CD4-positive, alpha-beta T cell (primary cell): ENCODE measurements at regions of chr5 and their contacts with region 1.

Region 1: DNA sequence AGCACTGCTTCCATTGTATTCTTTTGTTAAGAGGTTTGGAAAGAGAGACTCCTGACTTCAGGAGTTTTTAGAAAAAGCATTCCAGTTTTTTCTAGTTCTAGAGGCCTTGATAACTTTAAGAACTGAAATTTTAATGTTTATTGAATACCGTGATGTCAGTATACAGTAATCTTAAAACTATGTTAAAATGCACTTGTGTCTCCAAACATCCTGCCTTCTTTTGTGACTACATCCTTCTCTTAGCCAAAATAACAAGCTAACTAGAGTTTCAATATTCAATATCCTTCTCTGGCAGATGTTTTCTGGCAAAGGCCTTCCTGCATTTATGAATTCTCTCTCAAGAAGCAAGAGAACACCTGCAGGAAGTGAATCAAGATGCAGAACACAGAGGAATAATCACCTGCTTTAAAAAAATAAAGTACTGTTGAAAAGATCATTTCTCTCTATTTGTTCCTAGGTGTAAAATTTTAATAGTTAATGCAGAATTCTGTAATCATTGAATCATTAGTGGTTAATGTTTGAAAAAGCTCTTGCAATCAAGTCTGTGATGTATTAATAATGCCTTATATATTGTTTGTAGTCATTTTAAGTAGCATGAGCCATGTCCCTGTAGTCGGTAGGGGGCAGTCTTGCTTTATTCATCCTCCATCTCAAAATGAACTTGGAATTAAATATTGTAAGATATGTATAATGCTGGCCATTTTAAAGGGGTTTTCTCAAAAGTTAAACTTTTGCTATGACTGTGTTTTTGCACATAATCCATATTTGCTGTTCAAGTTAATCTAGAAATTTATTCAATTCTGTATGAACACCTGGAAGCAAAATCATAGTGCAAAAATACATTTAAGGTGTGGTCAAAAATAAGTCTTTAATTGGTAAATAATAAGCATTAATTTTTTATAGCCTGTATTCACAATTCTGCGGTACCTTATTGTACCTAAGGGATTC is 43.1 kb downstream of the NDFIP1 start:
- DNase-seq: peak; percentile 14 to 84 (median 46)
- ATAC-seq: peak; percentile 67
- H3K4me3 ChIP-seq: no peak overlapping the region
- H3K4me3 Mint-ChIP-seq: no peak overlapping the region
- H3K27ac ChIP-seq: no peak overlapping the region
- H3K27ac Mint-ChIP-seq: peak overlapping the region; percentile 69
- H3K4me1 ChIP-seq: no peaks in the 10 kb centered on the region
- H3K4me1 Mint-ChIP-seq: peaks cover 11% of the 10 kb centered on the region
- H3K27me3 ChIP-seq: no peaks in the 10 kb centered on the region
- H3K27me3 Mint-ChIP-seq: no peaks in the 10 kb centered on the region
- CTCF ChIP-seq: peak; percentile 94

Region 2: GRCh38 chr5:140977003-140977402 is 1174.7 kb before region 1 on chr5:
- CTCF ChIA-PET with region 1: no interaction called
- POLR2A ChIA-PET with region 1: no interaction called
- intact Hi-C with region 1: no loop called
- DNase-seq: no peak
- ATAC-seq: no peak
- H3K4me3 ChIP-seq: no peak overlapping the region
- H3K4me3 Mint-ChIP-seq: no peak overlapping the region
- H3K27ac ChIP-seq: no peak overlapping the region
- H3K27ac Mint-ChIP-seq: no peak overlapping the region
- H3K4me1 ChIP-seq: no peaks in the 10 kb centered on the region
- H3K4me1 Mint-ChIP-seq: no peaks in the 10 kb centered on the region
- H3K27me3 ChIP-seq: peaks cover 0 to 6% of the 10 kb centered on the region in 2 experiments
- H3K27me3 Mint-ChIP-seq: peaks cover 36% of the 10 kb centered on the region
- CTCF ChIP-seq: no peak

Region 3: GRCh38 chr5:141245250-141245717 is 906.4 kb before region 1 on chr5 and contains the start of gene PCDHB15:
- CTCF ChIA-PET with region 1: no interaction called
- POLR2A ChIA-PET with region 1: no interaction called
- intact Hi-C with region 1: no loop called
- DNase-seq: peak in 4 of 14 experiments; percentile 5 to 42 (median 17)
- ATAC-seq: no peak
- H3K4me3 ChIP-seq: no peak within 1 kb of the TSS
- H3K4me3 Mint-ChIP-seq: peak within 1 kb of the TSS; percentile 51
- H3K27ac ChIP-seq: no peak within 1 kb of the TSS
- H3K27ac Mint-ChIP-seq: no peak within 1 kb of the TSS
- H3K4me1 ChIP-seq: peaks cover 3% of the 10 kb centered on the region
- H3K4me1 Mint-ChIP-seq: peaks cover 4% of the 10 kb centered on the region
- H3K27me3 ChIP-seq: peaks cover 27 to 29% of the 10 kb centered on the region in 2 experiments
- H3K27me3 Mint-ChIP-seq: peaks cover 55% of the 10 kb centered on the region
- CTCF ChIP-seq: no peak
- total RNA-seq, gene PCDHB15: not detected

Region 4: GRCh38 chr5:142206801-142207200 is 55.1 kb after region 1 on chr5:
- CTCF ChIA-PET with region 1: no interaction called
- POLR2A ChIA-PET with region 1: no interaction called
- intact Hi-C with region 1: no loop called
- DNase-seq: no peak
- ATAC-seq: no peak
- H3K4me3 ChIP-seq: no peak overlapping the region
- H3K4me3 Mint-ChIP-seq: no peak overlapping the region
- H3K27ac ChIP-seq: no peak overlapping the region
- H3K27ac Mint-ChIP-seq: no peak overlapping the region
- H3K4me1 ChIP-seq: no peaks in the 10 kb centered on the region
- H3K4me1 Mint-ChIP-seq: no peaks in the 10 kb centered on the region
- H3K27me3 ChIP-seq: no peaks in the 10 kb centered on the region
- H3K27me3 Mint-ChIP-seq: no peaks in the 10 kb centered on the region
- CTCF ChIP-seq: no peak

Region 5: GRCh38 chr5:142324871-142325724 is 173.4 kb after region 1 on chr5 and contains the start of gene SPRY4:
- CTCF ChIA-PET with region 1: no interaction called
- POLR2A ChIA-PET with region 1: interaction called, 3 read pairs
- intact Hi-C with region 1: loop called (anchors 5 to 10 kb)
- DNase-seq: peak; percentile 51 to 86 (median 74)
- ATAC-seq: peak; percentile 81
- H3K4me3 ChIP-seq: peak within 1 kb of the TSS; percentile 61
- H3K4me3 Mint-ChIP-seq: peak within 1 kb of the TSS; percentile 87
- H3K27ac ChIP-seq: no peak within 1 kb of the TSS
- H3K27ac Mint-ChIP-seq: no peak within 1 kb of the TSS
- H3K4me1 ChIP-seq: peaks cover 33% of the 10 kb centered on the region
- H3K4me1 Mint-ChIP-seq: peaks cover 49% of the 10 kb centered on the region
- H3K27me3 ChIP-seq: peaks cover 54 to 58% of the 10 kb centered on the region in 2 experiments
- H3K27me3 Mint-ChIP-seq: peaks cover 81% of the 10 kb centered on the region
- CTCF ChIP-seq: no peak
- total RNA-seq, gene SPRY4: 0.16 to 0.34 TPM

Region 6: DNA sequence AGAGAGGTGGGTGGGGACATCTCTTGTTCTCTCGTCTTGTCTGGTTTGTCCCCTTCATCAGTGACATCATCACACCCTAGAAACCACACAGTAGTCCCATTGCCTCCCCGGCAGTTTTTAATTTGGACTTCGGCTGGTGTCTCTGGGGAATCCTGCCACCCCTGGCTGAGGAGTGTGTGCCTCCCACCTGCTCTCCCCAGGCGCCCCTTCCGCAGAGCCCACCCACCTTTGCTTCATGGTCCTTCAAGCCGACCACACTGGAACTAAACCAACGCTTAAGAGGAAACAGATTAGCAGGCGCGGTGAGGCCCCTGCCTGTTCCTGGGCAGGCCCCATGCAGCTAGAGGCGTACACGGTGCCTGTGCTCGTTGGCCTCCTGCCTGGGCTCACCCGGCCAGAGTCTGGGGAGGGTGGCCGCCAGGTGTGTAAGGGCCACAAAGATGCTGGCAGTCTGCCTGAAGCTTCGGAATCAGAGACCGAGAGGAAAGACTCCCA is 280.7 kb after region 1 on chr5:
- CTCF ChIA-PET with region 1: no interaction called
- POLR2A ChIA-PET with region 1: no interaction called
- intact Hi-C with region 1: loop called in 1 of 2 experiments (anchors 2 kb)
- DNase-seq: peak in 11 of 14 experiments; percentile 3 to 69 (median 15)
- ATAC-seq: peak; percentile 50
- H3K4me3 ChIP-seq: peak overlapping the region; percentile 14
- H3K4me3 Mint-ChIP-seq: peak overlapping the region; percentile 26
- H3K27ac ChIP-seq: peak overlapping the region; percentile 33 to 78
- H3K27ac Mint-ChIP-seq: peak overlapping the region; percentile 77
- H3K4me1 ChIP-seq: peaks cover 46% of the 10 kb centered on the region
- H3K4me1 Mint-ChIP-seq: peaks cover 43% of the 10 kb centered on the region
- H3K27me3 ChIP-seq: no peaks in the 10 kb centered on the region
- H3K27me3 Mint-ChIP-seq: no peaks in the 10 kb centered on the region
- CTCF ChIP-seq: no peak

Region 7: DNA sequence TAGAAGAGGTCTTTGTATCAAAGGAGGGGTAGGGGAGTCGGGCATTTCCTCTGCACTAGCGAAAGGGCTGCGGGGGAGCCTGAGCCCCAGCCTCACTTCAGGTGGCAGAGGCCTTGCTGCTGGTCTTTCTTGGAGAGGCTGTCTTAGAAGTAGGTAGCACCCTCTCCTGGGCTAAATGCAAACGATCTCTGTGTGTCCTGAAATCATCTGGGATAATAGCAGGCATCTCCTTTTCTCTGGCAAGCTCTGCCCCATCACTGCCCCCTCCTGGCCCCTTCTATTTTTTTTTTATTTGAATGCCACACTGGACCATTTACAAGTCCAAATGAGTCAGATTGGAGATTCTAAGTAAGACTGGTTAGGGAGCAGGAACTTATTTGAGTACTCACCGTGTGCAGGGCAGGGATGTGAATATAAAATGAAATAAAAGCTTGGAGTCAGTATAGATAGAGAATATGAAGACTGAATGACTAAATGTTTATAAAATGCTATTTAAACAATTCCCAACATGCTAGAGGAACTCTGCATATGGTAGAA is 397.1 kb after region 1 on chr5:
- CTCF ChIA-PET with region 1: interaction called, 4 read pairs
- POLR2A ChIA-PET with region 1: no interaction called
- intact Hi-C with region 1: loop called (anchors 1 kb)
- DNase-seq: peak in 4 of 14 experiments; percentile 28 to 57 (median 44)
- ATAC-seq: peak; percentile 49
- H3K4me3 ChIP-seq: no peak overlapping the region
- H3K4me3 Mint-ChIP-seq: no peak overlapping the region
- H3K27ac ChIP-seq: no peak overlapping the region
- H3K27ac Mint-ChIP-seq: no peak overlapping the region
- H3K4me1 ChIP-seq: peaks cover 11% of the 10 kb centered on the region
- H3K4me1 Mint-ChIP-seq: peaks cover 25% of the 10 kb centered on the region
- H3K27me3 ChIP-seq: peaks cover 21 to 25% of the 10 kb centered on the region in 2 experiments
- H3K27me3 Mint-ChIP-seq: peaks cover 31% of the 10 kb centered on the region
- CTCF ChIP-seq: peak; percentile 57

Region 8: GRCh38 chr5:142611154-142611553 is 459.4 kb after region 1 on chr5:
- CTCF ChIA-PET with region 1: no interaction called
- POLR2A ChIA-PET with region 1: no interaction called
- intact Hi-C with region 1: loop called (anchors 1 to 10 kb)
- DNase-seq: peak; percentile 34 to 70 (median 56)
- ATAC-seq: peak; percentile 94
- H3K4me3 ChIP-seq: no peak overlapping the region
- H3K4me3 Mint-ChIP-seq: no peak overlapping the region
- H3K27ac ChIP-seq: no peak overlapping the region
- H3K27ac Mint-ChIP-seq: no peak overlapping the region
- H3K4me1 ChIP-seq: no peaks in the 10 kb centered on the region
- H3K4me1 Mint-ChIP-seq: no peaks in the 10 kb centered on the region
- H3K27me3 ChIP-seq: peaks cover 0 to 3% of the 10 kb centered on the region in 2 experiments
- H3K27me3 Mint-ChIP-seq: peaks cover 34% of the 10 kb centered on the region
- CTCF ChIP-seq: peak; percentile 77

Region 9: DNA sequence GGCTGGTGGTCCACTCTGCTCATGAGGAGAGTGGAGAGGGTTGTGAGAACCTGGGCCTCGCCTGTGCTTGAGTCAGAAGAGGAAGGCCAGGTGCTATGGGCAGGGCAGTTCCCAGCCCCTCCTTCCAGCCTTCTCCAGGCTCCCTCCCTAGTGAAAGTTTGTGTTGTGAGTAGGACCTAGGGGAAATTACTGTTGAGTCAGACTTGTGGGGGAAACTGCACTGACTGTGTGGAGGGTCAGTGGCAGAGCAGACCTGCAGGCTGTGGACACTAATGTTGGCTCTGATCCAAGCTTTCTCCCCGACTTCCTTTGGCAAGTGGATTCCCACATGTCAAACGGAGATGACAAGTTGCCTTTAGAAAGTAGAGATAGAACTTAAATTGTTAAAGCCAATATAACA is 721.1 kb after region 1 on chr5:
- CTCF ChIA-PET with region 1: no interaction called
- POLR2A ChIA-PET with region 1: no interaction called
- intact Hi-C with region 1: loop called in 1 of 2 experiments (anchors 10 kb)
- DNase-seq: peak in 2 of 14 experiments; percentile 17 to 34
- ATAC-seq: no peak
- H3K4me3 ChIP-seq: no peak overlapping the region
- H3K4me3 Mint-ChIP-seq: no peak overlapping the region
- H3K27ac ChIP-seq: no peak overlapping the region
- H3K27ac Mint-ChIP-seq: no peak overlapping the region
- H3K4me1 ChIP-seq: no peaks in the 10 kb centered on the region
- H3K4me1 Mint-ChIP-seq: no peaks in the 10 kb centered on the region
- H3K27me3 ChIP-seq: no peaks in the 10 kb centered on the region
- H3K27me3 Mint-ChIP-seq: no peaks in the 10 kb centered on the region
- CTCF ChIP-seq: no peak